Cardiac septum (tissue), 1 donor: ENCODE measurements at regions of chr11 and their contacts with region 1.

Region 1: DNA sequence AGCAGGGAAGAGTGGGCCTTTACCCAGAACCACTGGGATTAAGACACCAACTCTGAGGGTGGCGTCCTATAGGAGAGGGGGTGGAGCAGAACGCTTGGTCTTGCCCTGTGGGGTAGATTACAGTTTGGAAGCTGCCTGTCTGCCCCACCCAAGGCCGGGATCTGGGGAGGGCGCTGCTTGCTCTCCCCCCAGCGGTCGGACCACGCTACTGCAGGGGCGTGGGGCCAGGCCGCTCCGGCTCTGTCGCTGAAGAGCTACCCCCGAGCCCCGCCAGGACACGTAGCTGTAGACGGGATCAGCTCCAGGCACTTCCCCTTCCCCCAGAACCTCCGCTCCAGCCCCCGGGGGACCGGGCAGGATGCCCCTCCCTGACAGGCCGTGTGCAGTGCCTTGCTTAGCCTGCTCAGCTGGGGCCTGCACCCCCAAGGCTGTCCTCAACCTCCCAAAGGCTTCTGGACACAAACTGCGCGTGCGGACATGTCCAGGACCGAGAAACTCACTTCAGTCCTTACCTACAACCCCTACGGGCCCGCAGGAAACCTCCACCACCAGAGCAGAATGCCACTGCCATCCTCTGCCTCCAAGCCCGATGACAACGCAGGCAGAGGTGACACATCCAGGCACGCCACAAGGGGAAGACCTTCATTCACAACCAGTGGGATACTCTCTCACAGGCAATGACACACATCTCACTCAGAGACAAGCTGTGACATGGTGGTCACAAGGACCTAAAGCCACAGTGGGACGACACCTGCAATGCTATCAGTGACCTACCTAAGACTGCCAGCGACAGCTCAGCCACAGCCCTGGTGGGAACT is 3.6 kb downstream of the AHNAK start:
- DNase-seq: peak; percentile 91

Region 2: DNA sequence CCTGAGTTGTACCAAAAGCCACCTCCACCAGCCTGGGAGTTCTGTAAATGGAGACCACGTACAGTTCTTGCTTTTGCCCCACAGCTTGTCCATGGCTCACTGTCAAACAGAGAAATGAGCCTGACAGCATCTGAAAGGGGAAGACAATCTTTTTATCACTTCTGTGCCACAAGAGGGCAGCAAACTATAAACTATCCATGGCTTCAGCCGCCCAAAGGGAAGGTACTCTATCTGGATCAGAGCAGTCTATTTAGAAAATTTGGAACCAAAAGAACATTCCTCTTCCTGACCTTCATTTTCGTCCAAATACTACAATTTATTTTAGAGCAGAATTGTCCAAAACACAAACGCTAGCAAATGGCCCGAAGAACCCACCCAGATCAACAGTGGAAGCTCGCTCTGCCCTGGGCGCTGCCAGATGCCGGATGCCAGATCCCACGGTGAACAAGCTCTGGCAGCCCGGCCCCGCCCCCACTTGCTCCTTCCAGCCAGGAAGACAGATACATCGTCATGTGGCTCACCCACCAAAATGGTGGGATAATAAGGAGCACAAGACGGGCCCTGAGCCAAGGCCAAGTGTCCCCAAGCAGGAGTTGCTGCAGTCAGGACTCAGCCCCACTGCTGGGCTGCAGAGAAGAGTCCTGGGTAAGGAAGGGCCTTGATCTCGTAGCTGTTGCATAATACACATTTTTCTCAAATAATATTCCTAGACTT is 148.0 kb before region 1 on chr11:
- intact Hi-C with region 1: loop called (anchors 2 kb)
- DNase-seq: peak; percentile 85

Region 3: DNA sequence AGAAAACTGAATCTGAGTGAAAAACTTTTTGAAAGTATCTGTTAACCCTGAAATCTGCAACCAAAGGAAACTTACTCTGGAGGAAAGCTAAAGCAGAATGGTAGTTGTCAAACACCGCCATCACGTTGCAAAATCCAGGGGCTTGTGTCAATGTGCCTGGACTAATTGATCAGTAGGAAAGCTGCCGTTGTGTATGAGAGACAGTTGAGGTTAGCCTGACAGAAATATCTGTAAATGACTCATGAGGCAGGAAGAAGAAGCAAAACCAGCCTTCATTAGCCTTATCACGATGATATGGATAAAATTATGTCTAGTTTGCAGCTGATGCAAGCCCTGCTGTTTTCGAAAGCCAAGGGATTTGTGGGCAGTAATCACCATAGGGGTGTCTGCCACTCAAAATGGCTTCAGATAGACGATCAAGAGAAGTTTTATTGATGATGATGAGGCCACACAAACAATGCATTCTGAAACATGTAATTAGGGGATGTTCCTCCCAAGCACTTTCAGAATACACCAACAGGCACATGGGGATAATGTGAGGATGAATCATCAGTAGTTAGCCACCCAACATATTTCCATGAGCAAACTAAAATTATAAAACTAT is 115.2 kb before region 1 on chr11:
- intact Hi-C with region 1: loop called (anchors 1 kb)
- DNase-seq: no peak

Region 4: DNA sequence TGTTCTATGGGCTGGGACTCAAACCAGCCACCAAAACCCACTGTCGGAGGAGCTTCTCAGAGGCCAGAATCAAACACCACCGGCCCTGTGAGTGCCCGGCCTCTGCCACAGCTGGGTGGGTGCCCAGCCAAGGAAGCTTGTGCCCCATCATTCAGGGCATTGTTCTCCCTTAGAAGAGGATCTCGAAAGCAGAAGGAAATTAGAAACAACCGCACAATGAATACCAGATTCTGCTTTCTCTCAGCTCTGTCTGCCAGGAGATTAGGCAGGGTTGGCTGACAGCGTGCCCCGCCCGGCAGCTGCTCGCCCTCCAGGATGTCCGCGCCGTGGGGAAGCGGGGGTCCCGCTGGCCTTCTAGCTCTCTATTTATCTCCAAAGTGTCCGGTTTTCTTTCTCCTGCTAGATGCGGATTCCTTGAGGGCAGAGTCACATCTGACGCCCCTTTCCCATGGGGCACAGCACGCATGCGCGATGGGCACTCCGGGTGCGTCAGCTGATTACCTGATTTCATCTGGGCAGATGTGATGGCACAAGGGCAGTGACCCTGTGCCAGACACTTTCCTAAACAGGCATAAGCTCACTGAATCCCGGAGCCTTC is 98.6 kb before region 1 on chr11:
- intact Hi-C with region 1: loop called (anchors 5 kb)
- DNase-seq: peak; percentile 79

Region 5: DNA sequence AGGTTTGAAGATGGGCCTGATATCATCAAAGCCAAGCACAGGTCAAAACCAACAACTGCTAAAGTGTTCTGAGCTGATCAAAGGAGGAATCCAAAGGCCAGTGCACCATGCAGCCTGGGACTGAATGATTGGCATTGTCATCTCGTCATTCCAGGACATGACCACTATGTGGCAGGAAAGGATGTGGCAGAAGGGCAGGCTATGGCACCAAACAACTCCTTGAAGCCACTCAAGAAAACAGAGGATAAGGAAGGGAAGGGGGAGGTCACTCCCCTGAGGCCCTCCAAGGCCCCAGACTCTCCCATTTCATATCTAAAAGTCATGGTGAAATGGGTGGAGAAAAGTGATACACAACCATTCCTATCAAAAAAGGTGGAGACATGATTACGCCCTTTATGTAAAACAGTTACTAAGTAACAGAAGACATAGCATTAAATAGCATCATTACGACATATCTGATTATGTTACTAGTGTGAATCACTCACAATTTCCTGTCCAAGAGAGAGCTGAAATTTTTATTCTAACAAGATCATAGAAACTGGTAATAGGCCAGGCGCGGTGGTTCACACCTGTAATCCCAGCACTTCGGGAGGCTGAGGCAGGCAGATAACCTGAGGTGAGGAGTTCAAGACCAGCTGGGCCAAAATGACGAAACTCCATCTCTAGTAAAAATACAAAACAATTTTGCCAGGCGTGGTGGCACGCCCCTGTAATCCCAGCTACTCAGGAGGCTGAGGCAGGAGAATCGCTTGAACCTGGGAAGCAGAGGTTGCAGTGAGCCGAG is 45.6 kb before region 1 on chr11:
- intact Hi-C with region 1: loop called (anchors 1 kb)
- DNase-seq: no peak

Region 6: DNA sequence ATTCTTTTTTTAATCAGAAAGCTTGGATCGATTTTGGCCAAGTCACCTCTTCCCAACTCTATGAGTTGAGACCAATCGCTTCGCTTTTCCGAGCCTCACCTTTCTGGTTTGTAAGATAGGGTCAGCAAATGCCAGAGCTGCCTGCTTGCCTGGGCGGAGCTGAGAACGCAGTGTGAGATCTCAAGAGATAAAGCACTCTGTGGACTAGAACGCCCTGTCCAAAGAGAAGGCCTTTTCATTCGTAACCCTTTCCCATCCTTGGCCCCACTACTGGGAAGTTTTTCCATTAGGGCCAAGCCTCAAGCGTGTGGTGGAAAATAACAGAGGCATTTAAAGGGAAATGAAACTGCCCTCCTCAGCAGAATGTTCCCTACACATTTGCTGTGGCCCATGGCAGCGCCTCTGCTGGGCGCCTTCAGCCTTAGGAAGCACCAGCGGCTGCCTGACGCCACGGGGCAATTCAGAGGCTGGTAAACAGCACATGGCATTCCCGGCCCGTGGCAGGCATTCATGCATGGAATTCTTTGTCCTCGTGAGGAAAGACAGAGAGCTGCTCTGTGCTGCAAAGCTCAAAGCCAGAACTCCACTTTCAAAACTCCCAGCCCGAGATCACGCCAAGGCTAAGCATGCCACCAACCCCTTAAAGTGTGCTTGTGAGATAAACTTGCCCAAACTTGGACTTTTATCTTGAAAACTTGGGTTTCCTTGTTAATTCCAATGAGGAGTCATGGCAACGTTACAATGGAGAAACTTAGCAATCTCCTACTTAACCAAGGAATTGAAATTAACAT is 34.5 kb before region 1 on chr11:
- intact Hi-C with region 1: loop called (anchors 1 kb)
- DNase-seq: peak; percentile 86

Region 7: GRCh38 chr11:62560566-62561103 is 17.7 kb after region 1 on chr11:
- intact Hi-C with region 1: loop called (anchors 2 kb)
- DNase-seq: peak; percentile 91